Mammary epithelial cell (primary cell): ENCODE measurements at regions of chr7 and their contacts with region 1.

Region 1: DNA sequence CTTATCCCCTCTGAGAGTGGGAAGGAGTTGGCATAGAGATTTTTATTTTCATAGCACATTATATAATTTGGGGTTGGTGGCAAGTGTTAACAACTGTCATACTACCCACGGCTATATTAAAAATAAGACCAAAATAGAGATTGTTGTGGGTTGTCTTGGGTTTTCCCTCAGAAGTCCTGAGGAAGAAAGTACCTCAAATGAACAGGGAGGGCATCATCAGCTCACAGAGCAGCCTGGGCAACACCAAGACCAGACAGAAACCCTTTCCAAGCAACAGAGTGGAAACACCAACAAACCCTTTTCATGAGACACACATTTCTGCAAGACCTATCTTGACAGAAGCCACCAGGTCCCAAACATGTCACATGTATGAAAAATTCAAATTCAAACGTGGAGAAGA is 121.2 kb downstream of the GLI3 start:
- DNase-seq: no peak
- H3K4me3 ChIP-seq: no peak overlapping the region
- H3K27ac ChIP-seq: no peak overlapping the region
- H3K4me1 ChIP-seq: no peaks in the 10 kb centered on the region
- H3K27me3 ChIP-seq: no peaks in the 10 kb centered on the region
- CTCF ChIP-seq: peak in 1 of 2 donors; percentile 15

Region 2: DNA sequence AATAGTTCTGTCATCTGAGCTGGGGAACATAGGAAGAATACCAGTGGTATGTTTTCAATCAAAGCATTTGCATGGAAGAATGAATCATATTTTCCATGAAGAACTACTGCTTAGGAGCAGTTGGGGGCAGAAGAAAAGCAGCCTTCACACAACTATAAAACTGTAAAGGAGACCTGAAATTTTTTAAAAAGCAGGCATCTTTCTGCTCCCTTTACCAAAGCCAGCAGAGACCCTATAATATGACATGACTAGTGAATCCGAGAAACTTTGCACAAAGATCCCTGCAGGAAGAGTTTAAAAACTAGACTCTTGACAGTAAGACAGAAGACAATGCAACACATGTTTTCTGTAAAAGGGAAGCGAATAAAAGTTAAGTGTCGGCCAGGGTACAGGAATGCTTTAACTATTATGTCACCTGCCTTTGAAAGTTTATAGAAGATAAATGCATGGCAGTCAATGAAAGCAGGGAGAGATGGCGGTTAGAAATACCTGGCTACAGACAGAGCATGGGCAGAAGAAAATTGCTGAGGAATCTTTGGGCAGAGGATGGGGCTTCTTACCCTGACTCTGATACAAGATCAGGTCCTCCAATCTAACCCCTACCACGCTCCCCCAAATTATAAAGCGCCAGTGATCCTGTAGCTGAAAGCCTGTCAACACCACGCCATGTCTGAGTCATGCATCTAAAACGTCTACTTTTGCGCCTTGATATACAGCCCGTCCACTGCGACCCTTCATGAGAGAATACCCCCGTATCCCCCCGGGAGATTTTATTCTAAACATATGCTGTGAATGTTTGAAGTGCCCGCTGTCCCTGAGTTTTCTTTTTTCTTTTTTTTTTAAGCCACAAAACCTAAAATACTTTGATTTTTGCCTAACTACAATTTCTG is 28.2 kb after region 1 on chr7:
- CTCF ChIA-PET with region 1: no interaction called
- dilution Hi-C with region 1: no loop called
- in situ Hi-C with region 1: no loop called
- intact Hi-C with region 1: no loop called
- DNase-seq: no peak
- H3K4me3 ChIP-seq: no peak overlapping the region
- H3K27ac ChIP-seq: no peak overlapping the region
- H3K4me1 ChIP-seq: no peaks in the 10 kb centered on the region
- H3K27me3 ChIP-seq: no peaks in the 10 kb centered on the region
- CTCF ChIP-seq: no peak

Region 3: DNA sequence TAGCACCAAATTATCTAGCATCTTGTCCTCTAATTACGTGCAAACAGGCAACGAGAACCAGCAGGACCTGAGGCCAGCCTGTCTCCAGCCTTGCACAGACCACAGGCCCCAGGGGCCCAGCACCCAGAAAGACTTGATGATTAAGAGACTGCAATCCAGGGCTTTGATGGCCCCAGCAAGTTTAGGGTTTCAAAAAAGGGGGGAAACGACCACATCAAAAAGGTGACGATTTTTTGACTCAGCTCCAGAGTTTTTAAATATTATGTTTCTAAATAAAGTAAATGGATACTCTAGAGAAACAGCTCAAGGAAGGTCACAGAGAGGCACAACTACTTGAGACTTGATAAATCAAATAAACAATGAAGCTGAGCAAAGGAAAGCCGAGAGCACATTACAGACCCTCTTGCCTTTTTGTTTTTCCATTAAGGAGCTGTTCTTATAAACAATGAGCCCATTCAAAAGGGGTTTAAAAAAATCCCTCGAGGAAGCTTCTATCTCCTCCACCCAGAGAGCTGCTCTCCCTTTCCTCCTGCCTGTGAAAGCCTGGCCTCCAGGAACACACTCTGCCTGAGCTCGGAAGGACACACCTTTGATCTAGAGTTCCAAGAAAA is 77.2 kb after region 1 on chr7:
- CTCF ChIA-PET with region 1: no interaction called
- dilution Hi-C with region 1: loop called (anchors 5 kb)
- in situ Hi-C with region 1: no loop called
- intact Hi-C with region 1: no loop called
- DNase-seq: peak; percentile 42
- H3K4me3 ChIP-seq: peak overlapping the region in 1 of 3 experiments; percentile 1
- H3K27ac ChIP-seq: peak overlapping the region; percentile 56
- H3K4me1 ChIP-seq: peaks cover 61% of the 10 kb centered on the region
- H3K27me3 ChIP-seq: no peaks in the 10 kb centered on the region
- CTCF ChIP-seq: no peak